ENCODE measurements at regions of chr2 and their contacts with region 1.

Region 1: DNA sequence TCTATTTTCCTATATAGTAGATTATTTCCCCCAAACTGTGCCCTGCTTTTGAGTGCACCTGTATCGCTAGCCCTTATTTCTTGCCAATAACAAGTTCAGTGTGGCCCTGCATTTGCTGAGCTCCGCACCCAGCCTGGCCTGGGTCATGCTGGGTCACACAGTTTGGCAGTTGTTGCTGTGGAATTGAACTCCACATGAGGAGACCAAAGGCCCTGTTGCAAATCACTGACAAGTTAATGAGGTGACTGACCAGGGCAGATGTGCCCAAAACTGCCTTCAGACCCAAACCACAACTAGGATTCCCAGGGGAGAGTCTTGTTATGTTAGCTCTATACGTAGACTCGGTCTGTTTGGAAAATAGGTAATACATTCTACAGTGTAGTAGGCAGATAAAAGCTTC is 31.0 kb downstream of the COL4A4 start:
- DNase-seq: no peak
- H3K4me3 ChIP-seq: no peak overlapping the region
- H3K27ac ChIP-seq: no peak overlapping the region
- H3K4me1 ChIP-seq: no peaks in the 10 kb centered on the region
- H3K27me3 ChIP-seq: peaks cover 2% of the 10 kb centered on the region
- CTCF ChIP-seq: no peak
- POLR2A ChIP-seq: no peak

Region 2: DNA sequence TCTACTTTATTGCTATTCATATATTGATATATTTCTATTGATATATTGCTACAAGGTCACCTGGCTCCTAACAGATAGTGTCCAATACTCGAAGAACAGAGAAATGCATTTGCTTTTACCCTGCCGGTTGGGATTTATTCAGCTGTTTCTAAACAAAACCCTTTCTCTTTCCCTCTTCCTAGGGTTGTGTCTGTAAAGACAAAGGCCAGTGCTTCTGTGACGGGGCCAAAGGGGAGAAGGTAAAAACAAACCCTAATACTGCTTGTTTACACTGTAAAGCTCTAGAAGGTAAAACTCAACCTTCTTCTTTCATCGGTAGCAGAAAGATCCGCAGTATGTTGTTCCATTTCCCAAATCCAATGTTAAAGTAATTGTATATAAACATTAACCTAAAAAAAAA is 104.8 kb after region 1 on chr2:
- intact Hi-C with region 1: loop called (anchors 2 kb)
- DNase-seq: no peak
- H3K4me3 ChIP-seq: no peak overlapping the region
- H3K27ac ChIP-seq: no peak overlapping the region
- H3K4me1 ChIP-seq: no peaks in the 10 kb centered on the region
- H3K27me3 ChIP-seq: no peaks in the 10 kb centered on the region
- CTCF ChIP-seq: no peak
- POLR2A ChIP-seq: no peak

Region 3: DNA sequence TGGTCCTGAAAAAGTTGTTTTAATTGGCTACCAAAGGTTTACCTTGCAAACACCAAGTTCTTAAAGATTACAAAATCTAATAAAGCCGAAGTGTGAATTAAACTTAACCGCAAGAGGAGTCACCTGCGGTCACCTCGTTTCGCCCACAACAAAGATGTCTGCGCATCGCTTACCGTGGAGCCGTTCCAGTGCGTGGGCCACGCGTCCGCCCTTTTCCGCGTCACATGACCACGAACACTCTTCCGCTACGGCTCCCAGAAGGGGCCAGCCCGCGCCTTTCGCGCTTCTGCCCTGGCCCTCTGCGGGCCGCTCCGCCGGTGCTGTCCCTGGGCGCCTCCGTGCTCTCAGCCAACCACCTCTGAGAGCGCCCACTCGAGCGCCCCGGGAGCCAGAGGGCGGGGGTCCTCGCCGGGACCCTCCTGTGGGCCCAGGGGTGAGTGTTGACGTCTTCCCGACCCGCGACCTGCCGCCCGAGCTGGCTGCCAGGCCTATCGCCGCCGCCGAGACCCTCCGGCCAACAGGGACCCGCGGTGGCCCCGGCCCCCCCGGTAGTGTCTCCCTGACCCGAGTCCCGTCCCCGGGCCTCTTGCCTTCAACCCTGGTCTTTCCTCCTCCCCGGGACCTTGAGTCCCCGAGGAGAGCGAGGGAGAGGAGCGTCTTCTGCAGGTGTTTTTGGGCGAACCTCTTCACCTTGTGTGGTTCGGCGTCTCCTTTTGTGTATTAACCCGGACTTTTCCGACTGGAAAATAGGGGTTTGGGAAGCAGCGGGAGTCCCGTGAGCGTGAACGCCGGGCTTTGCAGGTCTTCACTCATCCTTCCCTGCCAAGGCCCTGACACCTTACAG is 192.2 kb after region 1 on chr2 and contains the start of gene MFF:
- intact Hi-C with region 1: loop called (anchors 10 kb)
- DNase-seq: peak; percentile 93
- H3K4me3 ChIP-seq: peak within 1 kb of the TSS; percentile 94
- H3K27ac ChIP-seq: peak within 1 kb of the TSS; percentile 91 to 93
- H3K4me1 ChIP-seq: no peaks in the 10 kb centered on the region
- H3K27me3 ChIP-seq: no peaks in the 10 kb centered on the region
- CTCF ChIP-seq: peak in 2 of 4 experiments; percentile 28 to 35
- POLR2A ChIP-seq: peak; percentile 63
- total RNA-seq, gene MFF: 94.7 to 180 TPM